ENCODE measurements at regions of chr21 and their contacts with region 1.

Region 1: GRCh38 chr21:33915368-33916199 is at the start of gene ATP5PO:
- DNase-seq: peak; percentile 94
- H3K4me3 ChIP-seq: peak within 1 kb of the TSS; percentile 69
- H3K27ac ChIP-seq: no peak within 1 kb of the TSS
- H3K27me3 ChIP-seq: no peaks in the 10 kb centered on the region
- CTCF ChIP-seq: no peak; the same call in 1 of the 2 replicates
- polyA plus RNA-seq, gene ATP5PO: 300 and 365 TPM in 2 replicates

Region 2: DNA sequence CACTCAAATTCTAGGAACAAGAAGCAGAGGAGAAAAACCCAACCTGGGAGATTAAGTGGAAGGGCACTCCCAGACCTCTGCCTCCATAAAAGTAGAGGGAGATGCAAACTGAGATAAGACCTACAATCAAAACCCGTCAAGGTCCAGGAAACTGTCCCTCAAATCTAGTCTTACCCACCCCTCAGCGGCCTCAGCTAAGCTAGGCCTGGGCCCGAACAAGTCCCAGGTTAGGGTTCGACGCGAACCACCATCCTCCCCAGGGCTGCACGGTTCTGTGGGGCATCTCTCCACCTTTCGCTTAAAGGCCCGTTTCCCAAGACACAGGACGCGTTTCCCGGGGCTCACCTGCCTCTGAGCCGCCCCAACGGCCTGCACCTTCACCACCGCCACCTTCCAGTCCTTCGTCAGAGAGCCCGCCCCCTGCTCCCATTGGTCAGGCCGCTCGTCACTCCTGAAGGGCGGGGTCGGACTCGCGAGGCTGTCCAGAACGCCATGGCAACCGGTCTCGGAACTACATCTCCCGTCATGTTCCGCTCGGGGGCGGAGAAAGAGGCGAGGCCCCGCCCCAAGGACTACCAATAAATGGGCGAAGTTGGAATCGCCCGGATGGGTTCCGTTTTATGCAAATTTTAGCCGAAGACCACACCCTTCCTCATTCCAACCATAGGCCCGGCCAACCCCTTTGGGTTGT is 274.1 kb before region 1 on chr21 and contains the start of gene CRYZL1:
- CTCF ChIA-PET with region 1: no interaction called
- POLR2A ChIA-PET with region 1: interaction called, 15 read pairs
- DNase-seq: peak; percentile 98
- H3K4me3 ChIP-seq: peak within 1 kb of the TSS; percentile 93
- H3K27ac ChIP-seq: peak within 1 kb of the TSS; percentile 75
- H3K27me3 ChIP-seq: no peaks in the 10 kb centered on the region
- CTCF ChIP-seq: no peak
- polyA plus RNA-seq, gene CRYZL1: 43.9 and 58.4 TPM in 2 replicates

Region 3: GRCh38 chr21:34004974-34005373 is 89.4 kb after region 1 on chr21:
- CTCF ChIA-PET with region 1: no interaction called
- POLR2A ChIA-PET with region 1: no interaction called
- DNase-seq: no peak
- H3K4me3 ChIP-seq: no peak overlapping the region
- H3K27ac ChIP-seq: no peak overlapping the region
- H3K27me3 ChIP-seq: no peaks in the 10 kb centered on the region
- CTCF ChIP-seq: no peak

Measured in AG04450 (cell line).